Right cardiac atrium (tissue), 5 donors: ENCODE measurements at regions of chr6 and their contacts with region 1.

Region 1: DNA sequence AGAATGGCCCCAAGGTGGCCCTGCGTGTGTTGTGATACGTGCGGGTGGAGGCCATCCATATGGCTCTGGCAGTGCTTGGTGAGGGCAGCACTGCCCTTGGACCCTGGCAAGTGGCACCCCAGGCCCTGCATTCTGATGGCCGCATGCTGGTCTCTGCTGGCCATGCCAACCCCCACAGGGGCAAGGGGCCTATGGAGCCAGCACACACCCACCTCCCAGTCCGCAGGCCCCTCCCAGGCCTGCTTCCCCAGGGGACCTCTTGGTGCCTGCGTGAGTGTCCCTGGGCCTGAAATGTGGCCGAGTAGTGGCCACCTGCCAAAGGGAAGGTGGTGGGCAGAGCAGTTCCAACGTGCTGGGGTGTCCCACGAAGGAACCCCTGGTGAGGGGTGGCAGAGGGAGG is 17.6 kb downstream of the NQO2 start:
- DNase-seq: no peak
- ATAC-seq: no peak
- H3K4me3 ChIP-seq: no peak overlapping the region
- H3K27ac ChIP-seq: no peak overlapping the region
- H3K4me1 ChIP-seq: no peaks in the 10 kb centered on the region
- H3K27me3 ChIP-seq: no peaks in the 10 kb centered on the region

Region 2: GRCh38 chr6:2324166-2324953 is 692.9 kb before region 1 on chr6:
- intact Hi-C with region 1: no loop called
- DNase-seq: no peak
- ATAC-seq: no peak
- H3K4me3 ChIP-seq: no peak overlapping the region
- H3K27ac ChIP-seq: no peak overlapping the region
- H3K4me1 ChIP-seq: no peaks in the 10 kb centered on the region
- H3K27me3 ChIP-seq: no peaks in the 10 kb centered on the region

Region 3: GRCh38 chr6:3052481-3053230 is 35.4 kb after region 1 on chr6:
- intact Hi-C with region 1: loop called in 1 of 4 experiments (anchors 5 kb)
- DNase-seq: peak in 1 of 3 donors; percentile 64
- ATAC-seq: no peak
- H3K4me3 ChIP-seq: no peak overlapping the region
- H3K27ac ChIP-seq: no peak overlapping the region
- H3K4me1 ChIP-seq: peaks cover 2% of the 10 kb centered on the region
- H3K27me3 ChIP-seq: no peaks in the 10 kb centered on the region

Region 4: GRCh38 chr6:3231247-3232016 is 214.1 kb after region 1 on chr6:
- intact Hi-C with region 1: no loop called
- DNase-seq: peak; percentile 75 to 85 (median 84)
- ATAC-seq: peak; percentile 81 to 82
- H3K4me3 ChIP-seq: peak overlapping the region; percentile 83
- H3K27ac ChIP-seq: peak overlapping the region; percentile 40
- H3K4me1 ChIP-seq: peaks cover 6% of the 10 kb centered on the region
- H3K27me3 ChIP-seq: no peaks in the 10 kb centered on the region